ENCODE measurements at regions of chr2 and their contacts with region 1.

Region 1: GRCh38 chr2:113791697-113792590 is 35.5 kb upstream of the SLC35F5 start:
- DNase-seq: no peak
- H3K4me3 Mint-ChIP-seq: peak overlapping the region; percentile 65
- H3K27ac Mint-ChIP-seq: peak overlapping the region; percentile 94
- H3K4me1 Mint-ChIP-seq: peaks cover 27% of the 10 kb centered on the region
- H3K27me3 Mint-ChIP-seq: no peaks in the 10 kb centered on the region

Region 2: GRCh38 chr2:113692698-113693428 is 99.1 kb before region 1 on chr2:
- intact Hi-C with region 1: loop called (anchors 1 kb)
- DNase-seq: peak; percentile 32
- H3K4me3 Mint-ChIP-seq: peak overlapping the region; percentile 74
- H3K27ac Mint-ChIP-seq: peak overlapping the region; percentile 96
- H3K4me1 Mint-ChIP-seq: peaks cover 33% of the 10 kb centered on the region
- H3K27me3 Mint-ChIP-seq: peaks cover 8% of the 10 kb centered on the region

Region 3: GRCh38 chr2:113848758-113849415 is 56.9 kb after region 1 on chr2:
- intact Hi-C with region 1: loop called (anchors 2 kb)
- DNase-seq: no peak
- H3K4me3 Mint-ChIP-seq: no peak overlapping the region
- H3K27ac Mint-ChIP-seq: no peak overlapping the region
- H3K4me1 Mint-ChIP-seq: no peaks in the 10 kb centered on the region
- H3K27me3 Mint-ChIP-seq: no peaks in the 10 kb centered on the region

Region 4: DNA sequence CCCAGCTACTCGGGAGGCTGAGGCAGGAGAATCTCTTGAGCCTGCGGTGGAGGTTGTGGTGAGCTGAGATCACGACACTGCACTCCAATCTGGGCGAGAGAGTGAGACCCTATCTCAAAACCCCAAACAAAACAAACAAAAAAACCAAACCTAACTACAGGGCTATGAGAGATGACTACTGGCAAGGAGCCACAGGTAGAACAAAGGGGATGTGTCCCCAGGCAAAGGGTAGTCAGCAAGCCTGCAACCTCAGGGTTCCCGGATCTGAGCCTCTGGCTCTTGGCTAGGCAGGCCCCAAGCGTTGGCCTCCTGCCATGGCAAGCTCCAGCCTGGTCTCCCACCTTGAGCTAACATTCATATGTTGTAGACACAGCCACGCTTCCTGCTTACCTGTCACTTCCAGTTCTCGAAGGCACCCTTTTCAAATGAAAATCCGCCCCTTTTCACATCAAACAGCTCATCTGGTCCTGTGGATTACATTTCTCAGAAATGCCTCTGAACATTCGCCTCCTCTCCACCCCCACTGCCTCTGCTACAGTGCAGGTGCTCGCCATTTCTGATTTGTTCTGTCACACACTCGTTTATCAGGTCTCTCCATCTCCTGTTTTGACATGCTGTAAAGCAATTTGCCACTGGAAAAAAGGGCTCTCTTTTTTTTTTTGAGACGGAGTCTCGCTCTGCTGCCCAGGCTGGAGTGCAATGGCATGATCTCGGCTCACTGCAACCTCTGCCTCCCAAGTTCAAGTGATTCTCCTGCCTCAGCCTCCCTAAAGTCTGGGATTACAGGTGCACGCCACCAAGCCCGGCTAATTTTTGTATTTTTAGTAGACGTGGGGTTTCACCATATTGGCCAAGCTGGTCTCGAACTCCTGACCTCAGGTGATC is 84.8 kb after region 1 on chr2:
- intact Hi-C with region 1: loop called (anchors 2 kb)
- DNase-seq: peak; percentile 72
- H3K4me3 Mint-ChIP-seq: peak overlapping the region; percentile 10
- H3K27ac Mint-ChIP-seq: peak overlapping the region; percentile 81
- H3K4me1 Mint-ChIP-seq: peaks cover 60% of the 10 kb centered on the region
- H3K27me3 Mint-ChIP-seq: no peaks in the 10 kb centered on the region

Region 5: GRCh38 chr2:113977660-113978523 is 185.9 kb after region 1 on chr2:
- intact Hi-C with region 1: no loop called
- DNase-seq: no peak
- H3K4me3 Mint-ChIP-seq: no peak overlapping the region
- H3K27ac Mint-ChIP-seq: no peak overlapping the region
- H3K4me1 Mint-ChIP-seq: peaks cover 14% of the 10 kb centered on the region
- H3K27me3 Mint-ChIP-seq: no peaks in the 10 kb centered on the region

Measured in activated T-helper 1 cell treated with anti-CD3 and anti-CD28 coated beads, Interleukin-12 subunit alpha, Interleukin-12 subunit beta, Interleukin-2, Interleukin-4 antibody, amounts not matched to agents 30 ng/mL and 10 ng/mL and 1 ng/mL, durations not matched to agents 14 hours and 24 hours and 36 hours (primary cell).